Transverse colon (tissue), 4 donors: ENCODE measurements at regions of chr4 and their contacts with region 1.

Region 1: GRCh38 chr4:155241664-155242063 is 33.2 kb downstream of the NPY2R start:
- DNase-seq: no peak
- H3K4me3 ChIP-seq: no peak overlapping the region
- H3K27ac ChIP-seq: no peak overlapping the region
- H3K4me1 ChIP-seq: no peaks in the 10 kb centered on the region
- H3K27me3 ChIP-seq: no peaks in the 10 kb centered on the region
- CTCF ChIP-seq: no peak
- EP300 ChIP-seq: no peak
- POLR2A ChIP-seq: no peak

Region 2: DNA sequence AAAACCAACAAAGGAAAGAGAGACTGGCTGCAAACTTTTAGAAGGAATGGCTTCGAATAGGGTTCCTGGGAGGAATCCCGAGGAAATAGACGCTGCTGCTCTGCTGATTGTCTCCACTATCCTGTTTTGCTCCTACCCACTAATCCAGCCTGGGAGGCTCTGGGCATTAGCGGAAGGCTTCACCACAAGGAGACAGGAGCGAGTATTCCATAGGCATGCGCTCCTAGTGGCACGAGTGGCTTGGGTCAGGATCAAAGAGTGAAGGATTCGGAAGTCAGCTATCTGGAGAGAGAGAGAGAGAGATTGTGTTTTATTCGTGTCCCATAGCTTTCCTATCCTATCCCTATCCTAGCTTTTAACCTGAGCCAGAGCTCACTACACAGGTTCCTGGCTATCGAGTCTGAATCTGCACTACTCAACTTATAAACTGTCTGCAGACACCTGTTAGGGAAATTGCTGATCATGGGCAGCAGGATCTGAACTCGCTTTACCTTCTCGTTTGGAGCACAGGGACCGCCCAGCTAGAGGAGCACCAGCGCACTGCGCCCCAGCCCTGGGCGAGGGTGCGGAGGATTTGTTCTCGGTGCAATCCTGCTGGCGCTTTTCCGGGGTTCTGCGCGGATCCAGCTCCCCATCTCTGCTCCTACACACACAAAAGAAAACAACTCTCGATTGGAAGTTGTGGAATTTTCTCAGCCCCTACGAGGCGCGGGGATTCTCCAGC is 34.0 kb before region 1 on chr4:
- in situ Hi-C with region 1: no loop called
- intact Hi-C with region 1: no loop called
- DNase-seq: peak; percentile 7
- H3K4me3 ChIP-seq: peak overlapping the region in 3 of 4 donors; percentile 12 to 33 (median 22)
- H3K27ac ChIP-seq: no peak overlapping the region
- H3K4me1 ChIP-seq: peaks cover 0 to 12% (median 5%) of the 10 kb centered on the region in 4 donors
- H3K27me3 ChIP-seq: peaks cover 59% of the 10 kb centered on the region
- CTCF ChIP-seq: peak in 3 of 5 experiments; percentile 20 to 55 (median 31)
- EP300 ChIP-seq: no peak
- POLR2A ChIP-seq: no peak

Region 3: GRCh38 chr4:155268821-155269220 is 27.2 kb after region 1 on chr4:
- in situ Hi-C with region 1: no loop called
- intact Hi-C with region 1: no loop called
- DNase-seq: no peak
- H3K4me3 ChIP-seq: no peak overlapping the region
- H3K27ac ChIP-seq: no peak overlapping the region
- H3K4me1 ChIP-seq: no peaks in the 10 kb centered on the region
- H3K27me3 ChIP-seq: no peaks in the 10 kb centered on the region
- CTCF ChIP-seq: no peak
- EP300 ChIP-seq: no peak
- POLR2A ChIP-seq: no peak

Region 4: DNA sequence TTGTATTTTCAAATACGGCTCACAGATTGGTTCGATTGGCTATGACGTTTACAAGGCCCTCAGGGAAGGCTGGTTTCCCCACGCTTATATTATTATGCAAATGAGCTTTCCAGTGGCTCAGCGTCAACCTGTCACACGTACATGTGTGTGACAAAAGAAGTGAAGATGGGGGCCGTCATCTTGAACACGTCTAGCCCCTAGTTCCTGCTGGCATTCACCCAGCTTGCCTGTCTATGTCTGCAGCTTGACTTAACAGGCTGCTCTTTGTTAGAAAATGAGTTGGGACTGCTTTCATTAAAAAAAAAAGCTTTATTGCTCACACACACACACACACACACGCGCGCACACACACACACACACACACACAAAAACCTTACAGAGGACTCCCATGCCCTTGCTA is 995.6 kb after region 1 on chr4:
- in situ Hi-C with region 1: no loop called
- intact Hi-C with region 1: loop called (anchors 5 kb)
- DNase-seq: no peak
- H3K4me3 ChIP-seq: no peak overlapping the region
- H3K27ac ChIP-seq: no peak overlapping the region
- H3K4me1 ChIP-seq: no peaks in the 10 kb centered on the region
- H3K27me3 ChIP-seq: no peaks in the 10 kb centered on the region
- CTCF ChIP-seq: no peak
- EP300 ChIP-seq: no peak
- POLR2A ChIP-seq: no peak